Activated CD4-positive, alpha-beta T cell treated with anti-CD3 and anti-CD28 coated beads for 36 hours (primary cell): ENCODE measurements at regions of chrX and their contacts with region 1.

Region 1: DNA sequence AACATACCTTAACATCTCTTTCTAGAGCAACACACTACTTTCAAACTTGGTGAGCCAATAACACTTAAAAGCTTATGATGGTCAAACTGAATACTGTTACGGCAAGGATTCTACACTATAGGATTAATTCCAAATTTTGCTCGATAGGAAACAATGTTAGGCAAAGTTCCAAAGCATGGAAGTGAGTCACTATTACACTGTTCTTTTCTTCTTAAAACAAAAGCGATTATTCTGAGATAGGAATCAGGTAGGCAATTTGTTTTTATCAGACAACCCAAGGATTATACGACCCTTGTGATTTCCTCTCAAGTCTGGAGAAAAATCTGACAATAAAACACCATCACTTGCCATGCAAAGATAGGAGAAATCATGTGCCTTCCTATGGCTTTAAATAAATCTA is 81.5 kb downstream of the HUWE1 start:
- DNase-seq: no peak
- ATAC-seq: no peak
- H3K4me3 Mint-ChIP-seq: no peak overlapping the region
- H3K27ac Mint-ChIP-seq: no peak overlapping the region
- H3K4me1 Mint-ChIP-seq: peaks cover 4% of the 10 kb centered on the region
- H3K27me3 Mint-ChIP-seq: no peaks in the 10 kb centered on the region

Region 2: DNA sequence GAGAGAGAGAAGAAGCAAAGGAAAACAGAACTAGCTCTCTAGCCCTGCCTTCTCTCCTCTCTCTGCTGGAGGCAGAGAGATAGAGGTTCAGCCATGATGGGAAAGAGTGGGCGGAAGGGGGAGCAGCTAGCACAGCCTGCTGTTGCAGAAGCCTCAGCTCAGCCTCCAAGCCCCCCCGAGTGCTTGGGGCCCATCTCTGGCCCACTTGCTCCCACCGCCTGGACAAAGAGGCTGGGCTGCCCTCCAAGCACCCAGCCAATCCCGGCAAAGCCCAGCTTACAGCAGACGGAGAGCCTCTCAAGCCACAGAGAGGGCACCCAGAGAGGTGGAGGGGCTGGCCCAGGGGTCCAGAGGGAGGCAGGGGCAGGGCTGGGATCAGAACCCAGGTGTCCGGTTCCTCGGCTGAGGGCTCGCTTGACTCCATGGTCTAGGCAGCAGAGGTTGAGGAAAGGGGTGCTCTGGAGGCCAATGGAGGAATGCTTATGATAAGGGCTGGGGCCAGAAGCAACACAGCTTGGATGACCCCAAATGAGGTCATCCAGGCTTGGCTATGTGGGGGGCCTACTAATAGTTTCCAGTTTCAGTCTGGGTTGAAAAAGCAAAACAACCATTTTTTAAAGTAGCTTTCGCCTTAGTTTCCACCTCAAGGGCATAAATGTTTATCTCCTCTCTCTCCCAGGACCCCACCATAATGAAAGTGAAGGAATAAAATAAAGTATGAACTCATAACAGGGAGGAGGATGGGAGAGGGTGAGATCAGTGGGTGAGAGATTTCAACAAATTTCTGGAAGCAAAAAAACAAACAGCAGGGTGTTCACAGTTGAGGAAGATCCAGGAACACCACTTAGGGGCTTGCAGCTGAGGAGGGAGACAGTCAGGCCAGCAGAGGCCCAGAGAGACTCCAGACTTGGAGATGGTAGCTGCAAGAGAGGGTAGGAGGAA is 298.7 kb before region 1 on chrX:
- CTCF ChIA-PET with region 1: no interaction called
- POLR2A ChIA-PET with region 1: no interaction called
- intact Hi-C with region 1: no loop called
- DNase-seq: no peak
- ATAC-seq: no peak
- H3K4me3 Mint-ChIP-seq: no peak overlapping the region
- H3K27ac Mint-ChIP-seq: no peak overlapping the region
- H3K4me1 Mint-ChIP-seq: no peaks in the 10 kb centered on the region
- H3K27me3 Mint-ChIP-seq: no peaks in the 10 kb centered on the region

Region 3: GRCh38 chrX:53550756-53551463 is 54.1 kb before region 1 on chrX:
- CTCF ChIA-PET with region 1: no interaction called
- POLR2A ChIA-PET with region 1: no interaction called
- intact Hi-C with region 1: loop called in 1 of 2 experiments (anchors 5 kb)
- DNase-seq: no peak
- ATAC-seq: no peak
- H3K4me3 Mint-ChIP-seq: no peak overlapping the region
- H3K27ac Mint-ChIP-seq: no peak overlapping the region
- H3K4me1 Mint-ChIP-seq: no peaks in the 10 kb centered on the region
- H3K27me3 Mint-ChIP-seq: no peaks in the 10 kb centered on the region

Region 4: DNA sequence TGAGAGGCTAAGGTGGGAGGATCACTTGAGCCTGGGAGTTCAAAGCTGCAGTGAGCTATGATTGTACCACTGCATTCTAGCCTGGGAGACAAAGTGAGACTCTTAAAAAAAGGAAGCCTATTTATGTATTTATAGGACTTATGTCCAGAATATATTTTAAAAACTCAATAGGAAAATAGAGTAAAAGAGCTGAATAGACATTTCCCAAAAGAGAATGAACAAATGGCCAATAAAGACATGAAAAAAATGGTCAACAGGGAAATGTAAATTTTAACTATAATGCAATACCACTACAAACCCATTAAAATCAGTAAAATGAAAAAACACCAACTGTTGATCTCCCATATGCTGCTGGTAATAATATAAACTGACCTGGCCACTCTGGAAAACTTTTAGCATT is 33.5 kb before region 1 on chrX:
- CTCF ChIA-PET with region 1: no interaction called
- POLR2A ChIA-PET with region 1: no interaction called
- intact Hi-C with region 1: loop called in 1 of 2 experiments (anchors 5 kb)
- DNase-seq: no peak
- ATAC-seq: no peak
- H3K4me3 Mint-ChIP-seq: no peak overlapping the region
- H3K27ac Mint-ChIP-seq: no peak overlapping the region
- H3K4me1 Mint-ChIP-seq: no peaks in the 10 kb centered on the region
- H3K27me3 Mint-ChIP-seq: no peaks in the 10 kb centered on the region

Region 5: DNA sequence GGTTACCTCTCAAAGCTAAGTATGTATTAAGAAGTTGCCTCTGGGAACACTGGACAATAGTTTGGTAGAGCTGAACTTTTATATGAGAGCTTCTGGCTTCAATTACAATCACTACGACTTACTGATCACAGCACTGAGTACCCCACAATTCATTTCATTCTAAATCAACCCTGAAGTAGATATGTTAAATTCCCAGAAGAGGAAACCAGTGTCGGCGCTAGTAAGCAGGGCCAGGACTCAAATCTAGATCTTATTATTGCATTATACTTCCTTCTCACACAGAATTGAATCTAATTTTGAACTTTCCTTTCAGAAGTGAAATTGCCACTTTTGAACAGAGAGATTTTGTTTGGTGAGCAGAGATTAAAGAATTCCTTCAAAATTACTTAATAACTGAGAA is 39.7 kb after region 1 on chrX:
- CTCF ChIA-PET with region 1: no interaction called
- POLR2A ChIA-PET with region 1: no interaction called
- intact Hi-C with region 1: loop called in 1 of 2 experiments (anchors 5 kb)
- DNase-seq: no peak
- ATAC-seq: no peak
- H3K4me3 Mint-ChIP-seq: no peak overlapping the region
- H3K27ac Mint-ChIP-seq: peak overlapping the region; percentile 37
- H3K4me1 Mint-ChIP-seq: peaks cover 4% of the 10 kb centered on the region
- H3K27me3 Mint-ChIP-seq: no peaks in the 10 kb centered on the region